CD4-positive, alpha-beta memory T cell (primary cell): ENCODE measurements at regions of chr2 and their contacts with region 1.

Region 1: DNA sequence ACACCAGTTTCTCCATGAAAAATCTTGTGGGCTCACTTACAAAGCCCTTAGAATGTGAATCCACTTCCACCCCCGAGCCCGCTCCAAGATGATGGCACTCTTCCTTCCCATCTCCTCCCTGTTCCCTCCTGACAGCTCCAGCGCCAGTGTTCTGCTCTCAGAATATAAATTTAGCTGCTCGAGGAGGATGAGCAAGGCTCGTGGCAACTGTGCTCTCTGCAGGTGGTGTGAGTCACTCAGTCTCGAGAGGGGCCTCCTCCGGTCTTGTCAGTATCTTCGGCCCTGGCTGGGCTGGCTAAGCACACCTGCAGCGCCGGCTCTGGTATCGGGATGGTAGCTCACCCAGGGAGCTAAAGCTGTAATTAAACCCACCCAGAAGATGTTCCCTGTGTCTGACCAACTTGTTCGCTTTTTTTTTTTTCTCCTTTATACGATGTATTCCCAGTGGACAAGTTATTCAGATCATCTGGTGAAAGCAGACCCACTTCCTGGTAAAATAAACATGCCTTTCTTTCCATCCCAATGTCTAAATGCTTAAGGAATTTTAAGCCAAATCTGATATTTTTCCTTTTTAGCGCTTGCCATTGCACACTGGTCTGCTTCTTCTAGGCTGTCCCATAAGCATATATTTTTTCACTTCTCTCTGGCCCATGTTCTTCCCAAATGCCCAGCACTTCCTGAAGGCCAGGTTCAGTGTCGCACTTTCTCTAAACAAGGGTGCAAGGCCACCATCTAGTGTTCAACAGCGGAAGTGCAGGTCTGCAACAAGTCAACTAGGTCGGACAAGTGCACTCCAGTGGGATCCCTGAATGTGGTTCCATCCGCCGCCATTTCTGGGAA is 31.4 kb upstream of the YPEL5 start:
- DNase-seq: peak in 4 of 5 donors; percentile 27 to 45 (median 36)
- H3K4me3 ChIP-seq: no peak overlapping the region
- H3K4me3 Mint-ChIP-seq: peak overlapping the region in 1 of 8 donors; percentile 51
- H3K27ac ChIP-seq: no peak overlapping the region
- H3K27ac Mint-ChIP-seq: peak overlapping the region in 4 of 7 donors; percentile 5 to 20 (median 10)
- H3K4me1 ChIP-seq: no peaks in the 10 kb centered on the region
- H3K4me1 Mint-ChIP-seq: peaks cover 0 to 5% (median 3%) of the 10 kb centered on the region in 4 donors
- H3K27me3 ChIP-seq: no peaks in the 10 kb centered on the region
- H3K27me3 Mint-ChIP-seq: peaks cover 8 to 11% of the 10 kb centered on the region in 2 donors

Region 2: GRCh38 chr2:30089171-30089570 is 26.2 kb before region 1 on chr2:
- CTCF ChIA-PET with region 1: interaction called, 33 read pairs
- POLR2A ChIA-PET with region 1: no interaction called
- intact Hi-C with region 1: loop called (anchors 1 kb)
- DNase-seq: no peak
- H3K4me3 ChIP-seq: no peak overlapping the region
- H3K4me3 Mint-ChIP-seq: no peak overlapping the region
- H3K27ac ChIP-seq: no peak overlapping the region
- H3K27ac Mint-ChIP-seq: no peak overlapping the region
- H3K4me1 ChIP-seq: no peaks in the 10 kb centered on the region
- H3K4me1 Mint-ChIP-seq: peaks cover 0 to 5% (median 3%) of the 10 kb centered on the region in 4 donors
- H3K27me3 ChIP-seq: peaks cover 18% of the 10 kb centered on the region
- H3K27me3 Mint-ChIP-seq: peaks cover 32% of the 10 kb centered on the region in 2 donors

Region 3: DNA sequence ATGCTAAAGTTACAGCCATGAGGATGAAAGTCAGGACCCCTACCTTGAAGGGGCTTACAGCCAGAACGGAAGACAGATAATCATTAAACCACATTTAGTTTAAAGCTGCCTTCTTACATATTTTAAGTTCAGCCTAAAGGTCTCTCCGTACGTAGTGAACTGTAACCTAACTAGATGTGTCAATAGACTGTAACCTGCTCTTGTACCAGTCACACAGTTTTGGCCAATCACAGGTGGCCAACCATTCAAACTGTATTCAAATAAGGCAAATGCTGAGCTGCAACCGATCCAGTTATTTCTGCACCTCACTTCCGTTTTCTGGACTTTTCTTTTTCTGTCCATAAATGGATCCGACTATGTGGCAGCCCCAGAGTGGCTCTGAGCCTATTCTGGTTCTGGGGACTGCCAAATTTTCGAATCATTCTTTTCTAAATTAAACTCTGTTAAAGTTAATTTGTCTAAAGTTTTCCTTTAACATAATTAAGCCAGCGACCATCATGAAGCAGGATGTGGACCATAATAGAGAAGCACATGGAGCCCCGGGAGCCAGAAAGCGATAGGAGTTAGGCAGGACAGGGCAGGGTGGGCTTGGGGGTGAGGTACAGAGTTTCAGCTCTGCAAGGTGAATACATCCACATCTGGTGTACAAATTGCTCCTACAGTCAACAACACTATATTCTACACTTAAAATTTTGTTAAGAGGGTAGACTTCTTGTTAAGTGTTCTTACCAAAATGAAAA is 16.9 kb before region 1 on chr2:
- CTCF ChIA-PET with region 1: interaction called, 20 read pairs
- POLR2A ChIA-PET with region 1: no interaction called
- intact Hi-C with region 1: no loop called
- DNase-seq: no peak
- H3K4me3 ChIP-seq: no peak overlapping the region
- H3K4me3 Mint-ChIP-seq: no peak overlapping the region
- H3K27ac ChIP-seq: no peak overlapping the region
- H3K27ac Mint-ChIP-seq: no peak overlapping the region
- H3K4me1 ChIP-seq: no peaks in the 10 kb centered on the region
- H3K4me1 Mint-ChIP-seq: no peaks in the 10 kb centered on the region
- H3K27me3 ChIP-seq: peaks cover 2% of the 10 kb centered on the region
- H3K27me3 Mint-ChIP-seq: peaks cover 23 to 31% of the 10 kb centered on the region in 2 donors

Region 4: DNA sequence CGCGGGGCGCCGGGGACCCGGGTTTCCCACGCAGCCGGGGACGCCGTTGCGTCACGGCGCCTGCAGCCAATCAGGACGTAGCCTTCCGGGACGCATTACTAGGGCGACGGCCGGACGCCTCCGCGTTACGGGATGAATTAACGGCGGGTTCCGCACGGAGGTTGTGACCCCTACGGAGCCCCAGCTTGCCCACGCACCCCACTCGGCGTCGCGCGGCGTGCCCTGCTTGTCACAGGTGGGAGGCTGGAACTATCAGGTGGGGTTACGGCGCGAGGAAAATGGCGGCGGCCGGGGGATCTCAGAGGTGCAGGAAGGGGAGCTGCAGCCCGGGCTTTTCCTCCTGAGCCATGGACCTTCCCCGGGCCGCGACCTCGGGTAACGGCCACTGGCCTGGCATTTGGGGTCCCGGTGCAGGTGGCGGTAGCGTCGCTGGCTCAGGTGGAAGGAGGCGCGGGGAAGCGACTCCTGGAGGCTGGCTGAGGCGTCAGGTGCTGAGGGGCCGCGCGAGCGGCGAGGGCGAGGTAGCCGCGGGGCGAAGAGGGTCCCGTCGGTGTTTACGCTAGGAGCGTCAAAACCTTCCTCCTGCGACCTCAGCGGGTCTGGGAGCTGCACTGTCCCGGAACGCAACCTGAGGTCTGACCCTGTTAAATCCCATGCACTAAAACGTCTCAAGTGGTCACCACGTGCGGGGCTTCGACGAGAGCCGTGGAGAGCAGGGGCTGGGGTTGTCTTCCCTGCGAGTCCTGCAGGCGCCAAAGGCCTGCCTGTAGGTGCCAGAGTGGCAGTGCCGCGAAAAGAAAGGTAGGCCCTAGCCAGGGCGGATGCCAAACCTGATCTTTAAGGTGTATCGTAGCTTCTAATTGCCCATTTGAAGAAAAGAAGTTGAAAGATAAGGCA is 332.0 kb after region 1 on chr2 and contains the start of gene LCLAT1:
- CTCF ChIA-PET with region 1: no interaction called
- POLR2A ChIA-PET with region 1: no interaction called
- intact Hi-C with region 1: no loop called
- DNase-seq: peak; percentile 87 to 88 (median 88)
- H3K4me3 ChIP-seq: peak within 1 kb of the TSS; percentile 48 to 96
- H3K4me3 Mint-ChIP-seq: peak within 1 kb of the TSS; percentile 95 to 99 (median 96)
- H3K27ac ChIP-seq: peak within 1 kb of the TSS; percentile 83
- H3K27ac Mint-ChIP-seq: peak within 1 kb of the TSS; percentile 89 to 99 (median 98)
- H3K4me1 ChIP-seq: peaks cover 27% of the 10 kb centered on the region
- H3K4me1 Mint-ChIP-seq: peaks cover 23 to 40% (median 30%) of the 10 kb centered on the region in 4 donors
- H3K27me3 ChIP-seq: no peaks in the 10 kb centered on the region
- H3K27me3 Mint-ChIP-seq: peaks cover 0 to 1% of the 10 kb centered on the region in 2 donors
- total RNA-seq, gene LCLAT1: 11.5 to 14.1 TPM

Region 5: DNA sequence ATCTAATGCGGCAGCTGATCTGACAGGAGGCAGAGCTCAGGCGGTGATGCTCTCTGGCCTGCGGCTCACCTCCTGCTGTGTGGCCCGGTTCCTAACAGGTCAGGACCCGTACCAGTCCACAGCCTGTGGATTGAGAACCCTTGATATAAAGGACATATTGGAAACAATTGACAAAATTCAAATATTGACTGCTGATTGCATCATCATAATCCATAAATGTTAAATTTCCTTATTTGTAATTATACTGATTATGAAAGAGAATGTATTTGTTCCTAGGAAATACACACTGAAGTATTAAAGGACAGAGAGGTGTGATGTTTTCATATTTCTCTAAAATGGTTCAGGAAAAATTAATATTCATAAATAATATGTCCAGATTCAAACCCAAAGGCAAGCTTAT is 1529.2 kb after region 1 on chr2:
- CTCF ChIA-PET with region 1: no interaction called
- POLR2A ChIA-PET with region 1: no interaction called
- intact Hi-C with region 1: no loop called
- DNase-seq: no peak
- H3K4me3 ChIP-seq: no peak overlapping the region
- H3K4me3 Mint-ChIP-seq: no peak overlapping the region
- H3K27ac ChIP-seq: no peak overlapping the region
- H3K27ac Mint-ChIP-seq: no peak overlapping the region
- H3K4me1 ChIP-seq: no peaks in the 10 kb centered on the region
- H3K4me1 Mint-ChIP-seq: no peaks in the 10 kb centered on the region
- H3K27me3 ChIP-seq: no peaks in the 10 kb centered on the region
- H3K27me3 Mint-ChIP-seq: peaks cover 11 to 16% of the 10 kb centered on the region in 2 donors